Right cardiac atrium (tissue), 5 donors: ENCODE measurements at regions of chr10 and their contacts with region 1.

Region 1: DNA sequence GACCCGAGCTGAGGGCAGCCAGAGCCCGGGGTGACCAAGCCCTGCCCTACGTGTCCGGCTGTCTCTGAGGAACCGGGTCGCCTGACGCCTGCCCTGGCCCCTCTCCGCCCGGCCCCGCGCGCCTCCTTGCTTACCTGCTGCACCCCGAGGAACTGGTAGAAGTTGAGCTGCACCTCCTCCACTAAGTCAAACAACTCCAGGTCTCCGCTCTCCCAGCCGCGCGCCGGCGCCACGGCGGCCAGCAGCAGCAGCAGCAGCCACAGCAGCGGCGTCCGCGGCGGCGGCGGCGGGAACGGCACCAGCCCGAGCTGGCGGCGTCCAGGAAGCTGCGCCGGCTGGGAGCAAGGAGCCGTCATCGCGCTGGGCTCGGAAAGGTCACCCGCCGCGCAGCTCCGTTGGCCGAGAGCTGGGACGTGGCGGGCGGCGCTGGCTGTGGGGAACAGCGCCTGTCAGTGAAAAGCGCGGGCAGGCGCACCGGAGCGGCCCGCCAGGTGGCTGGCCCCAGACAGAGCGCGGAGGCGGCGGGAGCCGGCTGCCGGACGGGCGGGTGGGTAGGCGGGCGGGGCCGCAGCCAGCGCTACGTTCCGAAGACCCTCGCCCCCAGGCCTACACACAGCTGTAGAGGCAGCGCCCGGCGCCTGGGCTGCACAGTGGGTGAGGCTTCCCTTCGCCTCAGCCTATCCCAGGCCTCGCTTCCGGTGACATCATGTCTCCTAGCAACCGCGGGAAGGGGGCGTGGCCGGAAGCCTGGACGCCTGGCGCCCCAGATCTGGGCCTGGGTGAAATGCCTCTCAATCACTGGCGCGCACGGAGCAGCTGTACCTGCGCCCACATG is at the start of gene DNAJC1:
- DNase-seq: peak; percentile 97 to 99 (median 99)
- ATAC-seq: peak; percentile 100
- H3K4me3 ChIP-seq: peak within 1 kb of the TSS; percentile 76
- H3K27ac ChIP-seq: peak within 1 kb of the TSS; percentile 49
- H3K4me1 ChIP-seq: no peaks in the 10 kb centered on the region
- H3K27me3 ChIP-seq: no peaks in the 10 kb centered on the region
- total RNA-seq, gene DNAJC1: 13.9 to 21.4 (median 17.9) TPM

Region 2: DNA sequence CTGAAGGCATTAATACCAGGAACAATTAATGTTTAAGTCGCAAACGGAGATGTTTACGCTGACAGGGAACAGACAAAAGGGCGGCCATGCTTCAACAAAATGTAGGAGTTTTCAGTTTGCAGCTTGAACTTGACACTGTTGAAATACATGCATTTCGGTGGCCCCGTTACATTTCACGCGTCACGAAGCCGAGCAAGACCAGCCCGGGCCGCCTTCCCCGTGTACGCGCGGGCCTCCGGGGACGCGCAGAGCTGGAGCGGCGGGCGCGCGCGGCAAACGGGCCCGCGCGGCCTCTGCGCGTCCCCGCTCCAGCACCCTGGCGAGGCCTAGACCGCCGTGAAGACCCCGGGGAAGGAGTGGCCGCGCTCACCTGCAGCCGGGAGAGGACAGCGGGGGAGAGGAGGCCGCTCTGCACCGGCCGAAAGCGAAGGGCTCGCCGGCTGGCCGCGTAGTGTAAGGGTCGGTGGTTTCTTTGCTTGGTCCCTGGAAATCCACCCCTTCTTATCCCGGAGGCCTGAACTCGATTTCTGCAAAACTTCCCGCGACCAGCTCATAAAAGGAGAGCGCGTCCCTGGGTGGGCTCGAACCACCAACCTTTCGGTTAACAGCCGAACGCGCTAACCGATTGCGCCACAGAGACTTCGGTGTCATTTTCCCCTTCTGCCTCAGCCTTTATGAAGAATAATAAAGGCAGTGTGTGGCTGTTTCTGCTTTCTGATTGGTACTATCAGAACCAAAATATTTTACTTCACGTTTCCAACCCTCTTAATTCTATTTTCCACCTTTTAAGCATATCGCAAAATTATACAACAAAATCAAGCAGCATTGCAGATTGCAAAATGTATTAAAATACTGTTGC is 225.9 kb after region 1 on chr10:
- intact Hi-C with region 1: loop called in 3 of 4 experiments (anchors 10 kb)
- DNase-seq: peak; percentile 86 to 94 (median 93)
- ATAC-seq: peak; percentile 99
- H3K4me3 ChIP-seq: peak overlapping the region; percentile 90
- H3K27ac ChIP-seq: peak overlapping the region; percentile 97
- H3K4me1 ChIP-seq: peaks cover 2% of the 10 kb centered on the region
- H3K27me3 ChIP-seq: no peaks in the 10 kb centered on the region

Region 3: GRCh38 chr10:22325272-22326144 is 322.2 kb after region 1 on chr10:
- intact Hi-C with region 1: loop called in 1 of 4 experiments (anchors 10 kb)
- DNase-seq: peak; percentile 83 to 91 (median 88)
- ATAC-seq: peak; percentile 64 to 80
- H3K4me3 ChIP-seq: peak overlapping the region; percentile 97
- H3K27ac ChIP-seq: peak overlapping the region; percentile 30
- H3K4me1 ChIP-seq: peaks cover 2% of the 10 kb centered on the region
- H3K27me3 ChIP-seq: no peaks in the 10 kb centered on the region

Region 4: DNA sequence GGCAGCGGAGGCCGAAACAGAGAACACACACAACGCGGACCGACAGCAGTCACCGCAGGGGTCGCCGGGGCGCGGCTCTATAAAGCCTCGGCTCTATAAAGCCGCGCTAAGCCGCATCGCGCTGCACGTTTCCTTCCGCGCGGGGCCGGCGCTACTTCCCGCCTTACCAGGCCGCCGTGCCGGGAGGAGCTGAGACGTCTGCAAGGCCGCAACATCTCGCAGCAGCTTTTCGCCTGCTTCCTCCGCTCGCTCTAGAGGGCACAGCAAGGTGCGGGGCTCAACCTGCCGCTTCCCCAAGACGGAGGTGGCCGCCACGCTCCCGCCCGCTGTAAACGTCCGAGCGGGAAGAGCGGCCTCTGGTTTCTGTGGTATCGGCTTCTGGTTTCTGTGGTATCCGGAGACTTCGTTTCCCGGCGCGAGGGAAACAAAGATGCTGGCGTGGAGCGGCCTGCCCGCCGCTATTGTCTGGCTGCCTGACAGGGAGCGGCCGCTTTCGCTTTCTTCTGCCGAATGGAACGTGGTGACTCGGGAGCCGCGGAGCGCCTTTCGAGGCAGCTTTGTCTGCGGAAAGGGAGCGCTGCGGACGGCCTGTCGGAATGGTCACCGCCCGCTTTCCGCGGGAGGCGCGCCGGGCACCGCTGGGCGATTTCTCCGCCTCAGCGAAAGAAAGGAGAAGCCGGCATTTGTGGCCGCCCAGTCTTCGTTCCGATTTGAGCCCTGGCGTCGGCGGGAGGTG is 433.8 kb after region 1 on chr10:
- intact Hi-C with region 1: loop called in 1 of 4 experiments (anchors 10 kb)
- DNase-seq: peak; percentile 94 to 98 (median 97)
- ATAC-seq: peak; percentile 95 to 96
- H3K4me3 ChIP-seq: peak overlapping the region; percentile 81
- H3K27ac ChIP-seq: peak overlapping the region; percentile 96
- H3K4me1 ChIP-seq: peaks cover 3% of the 10 kb centered on the region
- H3K27me3 ChIP-seq: no peaks in the 10 kb centered on the region

Region 5: DNA sequence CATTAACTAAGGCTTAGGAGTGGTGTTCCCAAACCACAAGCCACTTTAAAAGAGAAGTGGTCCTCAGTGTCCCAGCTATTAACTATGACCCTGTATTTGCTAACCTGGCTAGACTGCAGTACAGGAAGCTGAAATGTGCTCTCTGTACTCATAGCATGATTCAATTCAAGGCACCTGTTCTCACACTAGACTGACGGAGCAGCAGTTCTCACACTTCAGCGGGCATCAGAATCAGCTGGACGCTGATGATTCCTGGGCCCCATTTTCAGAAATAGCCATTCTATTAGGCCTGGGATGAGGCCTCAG is 1067.6 kb after region 1 on chr10:
- intact Hi-C with region 1: loop called in 1 of 4 experiments (anchors 5 kb)
- DNase-seq: no peak
- ATAC-seq: no peak
- H3K4me3 ChIP-seq: no peak overlapping the region
- H3K27ac ChIP-seq: no peak overlapping the region
- H3K4me1 ChIP-seq: no peaks in the 10 kb centered on the region
- H3K27me3 ChIP-seq: no peaks in the 10 kb centered on the region